AG04450 (cell line): ENCODE measurements at regions of chr6 and their contacts with region 1.

Region 1: DNA sequence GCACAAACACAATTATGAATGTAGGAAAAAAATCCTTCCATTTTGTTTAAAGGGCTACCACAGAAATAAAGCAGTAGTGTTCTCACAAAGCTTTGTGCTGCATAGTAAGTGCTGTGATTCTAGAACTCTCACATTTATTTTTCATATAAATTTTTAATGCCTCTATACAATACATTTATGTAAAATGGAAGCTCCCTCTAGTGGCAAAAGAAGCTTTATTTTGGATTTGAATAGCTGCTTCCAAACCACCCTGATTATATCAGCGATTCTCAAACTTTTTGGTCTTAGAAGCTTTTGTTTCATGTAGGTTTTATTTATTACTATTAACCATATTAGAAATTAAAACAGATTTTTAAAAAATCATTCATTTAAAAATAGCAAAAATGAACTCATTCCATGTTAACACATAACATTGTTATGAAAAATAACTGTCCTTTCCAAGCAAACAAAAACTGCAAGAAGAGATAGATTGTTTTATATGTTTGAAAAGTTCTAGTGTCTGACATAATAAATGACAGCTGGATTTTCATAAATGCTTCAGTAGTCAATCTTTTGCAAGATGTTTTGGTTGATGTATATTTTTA is 38.4 kb downstream of the HS3ST5 start:
- DNase-seq: peak; percentile 7
- H3K4me3 ChIP-seq: no peak overlapping the region
- H3K27ac ChIP-seq: no peak overlapping the region
- H3K27me3 ChIP-seq: no peaks in the 10 kb centered on the region
- CTCF ChIP-seq: peak; percentile 61

Region 2: GRCh38 chr6:113980937-113981554 is 323.4 kb before region 1 on chr6:
- CTCF ChIA-PET with region 1: interaction called, 14 read pairs
- POLR2A ChIA-PET with region 1: no interaction called
- DNase-seq: no peak
- H3K4me3 ChIP-seq: no peak overlapping the region
- H3K27ac ChIP-seq: no peak overlapping the region
- H3K27me3 ChIP-seq: no peaks in the 10 kb centered on the region
- CTCF ChIP-seq: peak; percentile 64

Region 3: GRCh38 chr6:114281496-114281895 is 22.9 kb before region 1 on chr6:
- CTCF ChIA-PET with region 1: interaction called, 10 read pairs
- POLR2A ChIA-PET with region 1: no interaction called
- DNase-seq: no peak
- H3K4me3 ChIP-seq: no peak overlapping the region
- H3K27ac ChIP-seq: no peak overlapping the region
- H3K27me3 ChIP-seq: no peaks in the 10 kb centered on the region
- CTCF ChIP-seq: no peak

Region 4: DNA sequence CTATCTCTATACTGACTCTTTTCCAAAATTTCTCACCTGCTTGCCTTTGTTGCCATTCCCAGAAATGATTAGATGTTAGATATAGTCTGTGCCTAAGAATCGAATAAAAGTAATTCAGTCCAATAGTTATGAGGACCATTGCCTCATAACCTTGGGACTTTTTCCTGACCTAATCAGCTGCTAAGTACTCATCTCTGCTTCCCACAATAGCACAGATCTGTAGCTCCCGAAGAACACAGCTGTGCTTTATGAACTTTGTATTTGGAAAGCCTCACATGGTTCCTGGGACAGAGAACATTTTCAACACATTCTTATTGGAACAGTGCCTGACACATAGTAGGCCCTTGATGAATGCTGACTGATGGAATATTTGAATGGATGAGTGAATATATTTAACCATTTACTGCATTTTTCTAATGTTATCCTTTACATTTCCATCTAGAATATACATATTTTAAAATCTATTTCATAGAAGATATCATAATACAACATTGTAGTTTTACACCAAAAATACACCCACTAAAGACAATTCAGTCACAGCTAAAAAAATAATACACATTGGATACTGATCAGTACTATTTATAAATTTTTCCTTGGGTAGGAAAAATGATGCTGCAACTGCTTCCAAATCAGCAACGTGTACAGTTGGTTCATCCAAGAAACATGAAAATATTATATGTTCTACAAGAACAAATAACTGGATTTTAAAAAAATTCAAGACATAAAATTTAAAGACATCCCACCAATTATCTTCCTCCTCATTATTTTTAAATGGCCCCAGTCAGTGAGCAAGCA is 15.5 kb before region 1 on chr6:
- CTCF ChIA-PET with region 1: interaction called, 28 read pairs
- POLR2A ChIA-PET with region 1: no interaction called
- DNase-seq: no peak
- H3K4me3 ChIP-seq: no peak overlapping the region
- H3K27ac ChIP-seq: no peak overlapping the region
- H3K27me3 ChIP-seq: no peaks in the 10 kb centered on the region
- CTCF ChIP-seq: no peak